ENCODE measurements at regions of chr17 and their contacts with region 1.

Region 1: DNA sequence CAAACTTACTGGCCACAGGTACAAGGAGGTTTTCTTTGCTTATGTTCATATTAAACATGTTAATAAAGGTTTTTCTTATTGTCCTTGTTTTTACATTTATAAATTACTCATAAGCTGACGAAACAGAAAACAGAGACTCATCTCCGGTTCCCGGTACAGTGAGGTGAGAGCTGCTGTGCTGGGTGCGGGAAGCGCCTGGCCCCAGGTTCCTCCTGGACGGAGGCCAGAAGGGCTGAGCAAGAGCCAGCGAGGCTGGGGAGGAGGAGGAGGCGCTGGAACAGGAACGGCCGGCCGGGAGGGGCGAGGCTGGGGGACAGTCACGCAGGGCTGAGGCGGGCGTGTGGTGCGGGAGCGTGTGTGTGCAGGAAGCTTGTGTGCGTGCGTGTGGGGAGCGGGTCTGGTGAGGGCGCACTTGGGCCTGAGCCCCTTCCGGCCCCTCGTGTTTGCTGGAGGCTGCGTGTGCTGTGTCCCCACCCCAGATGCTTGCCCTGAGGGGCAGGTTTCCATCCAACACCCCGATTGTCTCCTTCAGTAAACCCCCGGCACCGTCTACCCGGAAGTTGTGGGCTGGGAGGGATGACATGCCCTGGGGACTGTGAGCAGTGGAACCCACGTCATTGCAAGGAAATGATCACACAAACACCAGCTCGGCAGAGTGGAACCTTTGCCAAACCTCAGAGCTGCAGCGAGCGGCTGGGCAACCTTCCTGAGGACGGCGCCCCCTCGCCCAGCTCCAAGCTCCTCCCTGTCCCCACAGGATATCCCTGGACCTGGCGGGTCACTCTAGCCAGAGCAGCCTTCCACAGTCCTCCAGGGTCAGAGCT is 19.5 kb downstream of the CD7 start:
- DNase-seq: peak; percentile 93
- H3K4me3 Mint-ChIP-seq: peak overlapping the region; percentile 88
- H3K27ac Mint-ChIP-seq: peak overlapping the region; percentile 100
- H3K4me1 Mint-ChIP-seq: peaks cover 87% of the 10 kb centered on the region
- H3K27me3 Mint-ChIP-seq: no peaks in the 10 kb centered on the region

Region 2: GRCh38 chr17:82205719-82206508 is 92.0 kb before region 1 on chr17:
- CTCF ChIA-PET with region 1: interaction called, 11 read pairs
- POLR2A ChIA-PET with region 1: interaction called, 14 read pairs
- DNase-seq: peak; percentile 86
- H3K4me3 Mint-ChIP-seq: peak overlapping the region; percentile 31
- H3K27ac Mint-ChIP-seq: peak overlapping the region; percentile 92
- H3K4me1 Mint-ChIP-seq: peaks cover 46% of the 10 kb centered on the region
- H3K27me3 Mint-ChIP-seq: no peaks in the 10 kb centered on the region

Region 3: GRCh38 chr17:82236142-82236981 is 61.6 kb before region 1 on chr17:
- CTCF ChIA-PET with region 1: interaction called, 16 read pairs
- POLR2A ChIA-PET with region 1: interaction called, 21 read pairs
- DNase-seq: peak; percentile 75
- H3K4me3 Mint-ChIP-seq: no peak overlapping the region
- H3K27ac Mint-ChIP-seq: peak overlapping the region; percentile 44
- H3K4me1 Mint-ChIP-seq: peaks cover 63% of the 10 kb centered on the region
- H3K27me3 Mint-ChIP-seq: no peaks in the 10 kb centered on the region

Region 4: DNA sequence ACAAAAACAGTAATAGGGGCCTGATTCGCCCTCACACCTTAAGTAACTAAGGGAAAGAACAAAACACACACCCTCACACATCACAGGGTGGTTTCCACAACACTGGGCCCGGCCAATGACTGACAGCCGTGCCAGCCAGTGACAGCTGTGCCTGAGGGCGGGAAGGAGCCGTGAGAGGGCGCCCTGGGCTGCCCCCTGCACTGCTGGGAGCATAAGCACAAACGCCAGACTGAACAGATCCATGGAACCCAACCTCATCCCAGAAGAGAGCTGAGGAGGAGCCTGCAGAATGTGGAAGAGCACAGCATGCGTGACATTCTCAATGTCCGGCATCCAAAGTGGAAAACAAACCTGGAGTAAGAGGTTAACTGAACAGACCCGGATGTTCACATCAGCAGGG is 40.5 kb before region 1 on chr17:
- CTCF ChIA-PET with region 1: no interaction called
- POLR2A ChIA-PET with region 1: no interaction called
- DNase-seq: no peak
- H3K4me3 Mint-ChIP-seq: no peak overlapping the region
- H3K27ac Mint-ChIP-seq: no peak overlapping the region
- H3K4me1 Mint-ChIP-seq: peaks cover 5% of the 10 kb centered on the region
- H3K27me3 Mint-ChIP-seq: no peaks in the 10 kb centered on the region

Region 5: GRCh38 chr17:82283208-82283749 is 14.6 kb before region 1 on chr17:
- CTCF ChIA-PET with region 1: interaction called, 6 read pairs
- POLR2A ChIA-PET with region 1: interaction called, 36 read pairs
- DNase-seq: peak; percentile 47
- H3K4me3 Mint-ChIP-seq: no peak overlapping the region
- H3K27ac Mint-ChIP-seq: no peak overlapping the region
- H3K4me1 Mint-ChIP-seq: peaks cover 32% of the 10 kb centered on the region
- H3K27me3 Mint-ChIP-seq: peaks cover 3% of the 10 kb centered on the region

Region 6: DNA sequence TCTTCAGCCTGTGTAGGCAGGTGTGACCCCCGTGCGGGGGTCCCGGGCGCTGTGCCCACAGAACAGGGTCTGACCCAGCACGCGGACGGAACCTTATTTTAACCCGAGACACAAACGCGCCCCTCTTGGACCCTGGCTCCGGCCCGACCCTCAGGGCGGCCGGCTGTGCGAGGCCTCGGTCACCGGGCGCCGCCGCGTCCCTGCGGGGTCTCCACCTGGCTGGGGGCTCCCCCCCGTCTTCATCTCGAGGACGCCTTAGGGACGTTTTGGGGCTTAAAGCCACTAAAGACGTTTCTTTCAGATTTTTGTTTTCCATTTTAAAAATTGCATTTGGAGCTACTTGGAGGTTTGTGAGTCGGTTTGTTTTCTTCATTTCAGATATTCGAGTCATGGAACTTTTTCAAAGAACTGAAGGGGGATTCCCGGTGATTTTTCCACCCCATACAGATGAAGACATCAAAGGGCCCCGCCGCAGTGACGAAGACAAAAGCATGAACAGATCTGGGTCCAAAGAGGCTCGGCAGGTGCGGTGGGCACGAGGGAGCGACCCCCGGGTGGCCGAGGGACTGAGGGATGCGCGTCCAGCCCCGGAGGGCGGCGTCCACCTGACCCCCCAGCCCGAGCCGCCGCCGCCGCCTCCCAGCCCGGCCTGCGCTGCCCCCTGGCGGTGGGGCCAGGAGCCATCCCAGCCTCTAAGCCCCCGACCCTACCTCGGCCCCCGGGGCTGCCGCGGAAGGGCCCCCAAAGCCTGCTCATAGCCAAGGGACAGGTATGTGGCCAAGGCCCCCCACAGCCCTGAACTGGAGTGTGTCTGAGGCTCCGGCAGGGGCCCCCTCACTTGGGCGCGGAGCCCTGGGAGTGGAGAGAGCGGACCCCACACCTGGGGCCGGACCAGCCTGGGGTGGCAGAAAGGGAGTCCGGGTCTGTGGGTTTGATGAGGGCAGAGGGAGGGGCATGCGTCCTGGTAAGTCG is 23.3 kb after region 1 on chr17:
- CTCF ChIA-PET with region 1: interaction called, 32 read pairs
- POLR2A ChIA-PET with region 1: interaction called, 120 read pairs
- DNase-seq: peak; percentile 63
- H3K4me3 Mint-ChIP-seq: peak overlapping the region; percentile 64
- H3K27ac Mint-ChIP-seq: peak overlapping the region; percentile 68
- H3K4me1 Mint-ChIP-seq: peaks cover 28% of the 10 kb centered on the region
- H3K27me3 Mint-ChIP-seq: no peaks in the 10 kb centered on the region

Region 7: DNA sequence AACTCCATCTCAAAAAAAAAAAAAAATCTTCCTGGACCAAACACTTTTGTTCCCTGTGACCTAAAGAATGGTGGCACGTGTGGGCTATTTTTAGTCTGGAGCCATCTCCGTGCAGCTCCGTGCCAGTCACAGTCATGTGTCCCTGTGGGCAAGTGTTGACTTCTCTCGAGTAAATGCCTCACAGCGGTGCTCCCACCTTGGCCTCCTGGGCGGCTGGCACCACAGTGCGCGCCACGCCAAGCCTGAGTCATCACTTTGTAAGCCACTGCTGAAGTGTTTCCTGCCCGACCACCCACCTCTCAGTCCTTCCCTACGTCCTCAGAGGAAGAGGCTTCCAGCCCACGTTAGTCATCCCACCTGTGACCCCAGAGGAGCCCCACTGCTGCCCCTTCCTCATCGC is 109.3 kb after region 1 on chr17:
- CTCF ChIA-PET with region 1: no interaction called
- POLR2A ChIA-PET with region 1: no interaction called
- DNase-seq: no peak
- H3K4me3 Mint-ChIP-seq: no peak overlapping the region
- H3K27ac Mint-ChIP-seq: no peak overlapping the region
- H3K4me1 Mint-ChIP-seq: peaks cover 7% of the 10 kb centered on the region
- H3K27me3 Mint-ChIP-seq: no peaks in the 10 kb centered on the region

Region 8: GRCh38 chr17:82450170-82451106 is 152.5 kb after region 1 on chr17 and contains the start of gene CYBC1:
- CTCF ChIA-PET with region 1: no interaction called
- POLR2A ChIA-PET with region 1: interaction called, 14 read pairs
- DNase-seq: peak; percentile 96
- H3K4me3 Mint-ChIP-seq: peak within 1 kb of the TSS; percentile 96
- H3K27ac Mint-ChIP-seq: peak within 1 kb of the TSS; percentile 99
- H3K4me1 Mint-ChIP-seq: peaks cover 49% of the 10 kb centered on the region
- H3K27me3 Mint-ChIP-seq: no peaks in the 10 kb centered on the region
- total RNA-seq, gene CYBC1: 308 to 313 TPM